Panc1 (cell line): ENCODE measurements at regions of chr5 and their contacts with region 1.

Region 1: DNA sequence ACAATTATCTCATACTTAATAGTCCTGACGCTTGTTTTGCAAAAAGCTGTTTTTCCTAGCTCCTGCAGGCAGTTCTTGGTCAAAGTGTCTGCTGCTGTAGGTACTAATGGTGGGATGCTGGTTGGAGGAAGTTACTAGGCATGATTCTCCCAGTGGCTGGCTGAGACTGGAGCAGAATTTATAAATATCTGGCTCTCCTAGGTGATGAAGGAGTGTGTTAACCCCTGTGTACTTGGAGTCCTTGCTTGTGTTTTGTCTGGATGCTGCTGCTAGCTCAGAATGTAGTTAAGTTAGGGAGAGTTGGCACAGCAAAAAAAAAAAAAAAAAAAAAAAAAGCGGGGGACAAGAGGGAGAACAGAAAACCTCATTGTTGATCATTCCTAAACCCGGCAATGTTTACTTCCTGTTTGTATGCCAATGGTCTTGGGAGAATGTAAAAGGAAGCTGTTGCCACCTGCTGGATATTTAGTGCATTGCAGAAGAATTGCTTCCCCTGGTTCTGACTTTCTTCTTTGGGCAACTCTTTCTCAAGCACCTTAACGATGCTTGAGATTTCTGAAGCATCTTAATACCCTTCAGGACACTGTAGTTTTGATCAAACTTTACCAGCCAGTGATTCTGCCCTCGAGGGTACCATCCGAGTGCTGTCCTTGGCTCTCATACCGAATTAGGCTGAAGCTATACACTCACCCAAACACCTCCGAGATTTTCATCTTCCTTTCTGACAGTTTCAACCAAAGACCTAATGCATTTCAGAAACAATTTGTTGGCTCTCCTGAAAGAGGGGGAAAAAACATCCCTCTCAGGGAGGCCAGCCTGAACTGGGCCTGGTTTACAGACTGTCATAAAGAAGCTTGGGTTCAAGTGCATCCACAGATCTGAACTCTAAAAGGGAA is 71.7 kb upstream of the WWC1 start:
- DNase-seq: peak; percentile 73
- ATAC-seq: peak; percentile 80
- H3K4me3 ChIP-seq: peak overlapping the region; percentile 1 to 40; a peak in 2 of 4 replicates
- H3K27ac ChIP-seq: peak overlapping the region; percentile 3; the same call in 1 of the 2 replicates
- H3K4me1 ChIP-seq: no peaks in the 10 kb centered on the region
- H3K27me3 ChIP-seq: peaks cover 8% of the 10 kb centered on the region
- CTCF ChIP-seq: peak; percentile 87

Region 2: DNA sequence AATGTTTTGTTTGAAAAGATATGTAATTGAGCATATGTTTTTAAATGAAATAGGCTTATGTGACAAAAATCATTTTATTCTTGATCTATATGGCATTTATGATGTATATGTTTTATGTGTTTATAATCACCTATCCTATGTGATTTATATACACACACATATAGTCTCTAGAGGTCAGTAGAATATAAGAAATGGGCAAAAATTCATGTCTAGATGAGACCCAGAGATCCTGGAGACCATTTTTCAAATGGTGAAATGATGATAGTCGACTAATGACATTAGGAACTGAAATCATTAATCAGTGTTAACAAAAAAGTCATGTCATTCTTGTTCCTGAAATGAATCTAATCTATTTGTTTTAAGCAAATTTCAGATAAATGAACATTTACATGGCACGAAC is 637.5 kb before region 1 on chr5:
- CTCF ChIA-PET with region 1: interaction called, 7 read pairs
- POLR2A ChIA-PET with region 1: no interaction called
- in situ Hi-C with region 1: no loop called
- intact Hi-C with region 1: loop called (anchors 2 kb)
- DNase-seq: no peak
- ATAC-seq: no peak
- H3K4me3 ChIP-seq: no peak overlapping the region
- H3K27ac ChIP-seq: no peak overlapping the region
- H3K4me1 ChIP-seq: no peaks in the 10 kb centered on the region
- H3K27me3 ChIP-seq: peaks cover 6% of the 10 kb centered on the region
- CTCF ChIP-seq: peak; percentile 35; the same call in 1 of the 2 replicates

Region 3: DNA sequence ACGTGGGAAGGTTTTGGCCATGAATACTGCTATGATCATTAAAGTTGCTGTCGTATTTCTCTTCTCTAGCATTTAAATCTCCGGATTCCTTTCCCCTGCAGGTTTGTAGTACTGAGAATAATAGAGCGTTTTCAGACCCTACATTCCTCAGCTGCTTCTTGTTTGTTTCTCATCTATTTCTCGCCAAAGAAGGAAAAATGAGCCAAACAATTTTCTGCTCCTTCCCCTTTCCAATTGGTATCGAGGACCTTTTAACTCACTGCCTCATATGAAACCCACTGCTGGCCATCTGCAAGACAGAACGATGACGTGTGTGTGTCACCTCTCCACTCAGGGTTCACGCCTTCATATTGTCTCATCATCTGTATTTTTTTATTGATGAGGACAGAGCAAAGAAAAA is 617.7 kb before region 1 on chr5:
- CTCF ChIA-PET with region 1: no interaction called
- POLR2A ChIA-PET with region 1: no interaction called
- in situ Hi-C with region 1: no loop called
- intact Hi-C with region 1: no loop called
- DNase-seq: no peak
- ATAC-seq: no peak
- H3K4me3 ChIP-seq: no peak overlapping the region
- H3K27ac ChIP-seq: no peak overlapping the region
- H3K4me1 ChIP-seq: no peaks in the 10 kb centered on the region
- H3K27me3 ChIP-seq: no peaks in the 10 kb centered on the region
- CTCF ChIP-seq: no peak

Region 4: DNA sequence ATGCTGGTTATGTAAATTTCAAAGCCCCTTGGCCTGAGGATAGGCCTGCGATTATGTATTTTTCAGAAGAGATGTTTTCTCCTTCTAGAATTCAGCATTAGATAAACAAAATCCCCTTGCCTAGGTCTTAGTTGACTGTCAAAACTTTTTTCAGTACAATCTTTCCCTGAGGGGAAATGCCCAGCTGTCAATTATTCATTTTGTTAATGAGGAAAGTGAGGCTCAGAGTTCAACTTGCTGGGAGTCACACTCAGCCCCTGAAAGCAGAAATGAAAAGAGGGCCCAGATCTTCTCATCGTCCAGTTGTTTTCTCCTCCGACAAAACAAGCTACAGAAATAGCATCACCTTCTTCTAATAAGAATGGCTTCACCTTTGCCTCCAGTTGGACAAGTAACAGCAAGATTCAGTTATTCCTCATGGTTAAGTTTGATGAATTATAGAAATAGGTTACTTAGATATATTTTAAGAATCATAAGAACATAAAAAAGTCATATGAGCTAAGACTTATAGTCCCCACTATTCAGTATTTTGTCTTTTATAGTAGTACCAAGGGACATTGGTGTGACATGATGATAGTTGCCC is 555.5 kb before region 1 on chr5:
- CTCF ChIA-PET with region 1: no interaction called
- POLR2A ChIA-PET with region 1: no interaction called
- in situ Hi-C with region 1: no loop called
- intact Hi-C with region 1: no loop called
- DNase-seq: no peak
- ATAC-seq: no peak
- H3K4me3 ChIP-seq: no peak overlapping the region
- H3K27ac ChIP-seq: no peak overlapping the region
- H3K4me1 ChIP-seq: no peaks in the 10 kb centered on the region
- H3K27me3 ChIP-seq: no peaks in the 10 kb centered on the region
- CTCF ChIP-seq: no peak

Region 5: GRCh38 chr5:167730121-167730520 is 489.6 kb before region 1 on chr5:
- CTCF ChIA-PET with region 1: interaction called, 13 read pairs
- POLR2A ChIA-PET with region 1: no interaction called
- in situ Hi-C with region 1: no loop called
- intact Hi-C with region 1: no loop called
- DNase-seq: no peak
- ATAC-seq: no peak
- H3K4me3 ChIP-seq: no peak overlapping the region
- H3K27ac ChIP-seq: no peak overlapping the region
- H3K4me1 ChIP-seq: no peaks in the 10 kb centered on the region
- H3K27me3 ChIP-seq: no peaks in the 10 kb centered on the region
- CTCF ChIP-seq: no peak

Region 6: GRCh38 chr5:168104811-168105481 is 114.8 kb before region 1 on chr5:
- CTCF ChIA-PET with region 1: interaction called, 10 read pairs
- POLR2A ChIA-PET with region 1: no interaction called
- in situ Hi-C with region 1: no loop called
- intact Hi-C with region 1: no loop called
- DNase-seq: no peak
- ATAC-seq: no peak
- H3K4me3 ChIP-seq: no peak overlapping the region
- H3K27ac ChIP-seq: no peak overlapping the region
- H3K4me1 ChIP-seq: no peaks in the 10 kb centered on the region
- H3K27me3 ChIP-seq: peaks cover 3% of the 10 kb centered on the region; the same call in 1 of the 2 replicates
- CTCF ChIP-seq: no peak

Region 7: DNA sequence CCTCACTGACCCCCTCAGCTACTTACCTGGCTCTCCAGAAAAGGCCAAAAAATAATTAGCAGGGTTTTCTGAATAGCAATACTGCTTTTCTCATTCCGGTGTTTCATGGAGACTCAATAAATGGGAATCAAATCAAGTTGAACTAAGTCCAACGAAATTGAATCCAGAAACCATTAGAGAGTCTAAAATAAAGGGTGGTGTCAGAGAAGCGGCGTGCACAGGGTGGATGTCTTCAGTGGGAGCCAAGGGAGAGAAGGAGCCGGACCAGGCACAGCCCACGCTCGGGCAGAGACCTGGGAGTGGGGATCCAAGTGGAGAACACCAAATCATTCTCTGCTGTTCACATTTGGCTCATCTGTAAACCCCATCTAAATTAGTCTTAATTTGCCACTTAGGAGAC is 31.5 kb after region 1 on chr5:
- CTCF ChIA-PET with region 1: interaction called, 19 read pairs
- POLR2A ChIA-PET with region 1: no interaction called
- in situ Hi-C with region 1: no loop called
- intact Hi-C with region 1: no loop called
- DNase-seq: no peak
- ATAC-seq: no peak
- H3K4me3 ChIP-seq: no peak overlapping the region
- H3K27ac ChIP-seq: no peak overlapping the region
- H3K4me1 ChIP-seq: no peaks in the 10 kb centered on the region
- H3K27me3 ChIP-seq: no peaks in the 10 kb centered on the region
- CTCF ChIP-seq: no peak

Region 8: DNA sequence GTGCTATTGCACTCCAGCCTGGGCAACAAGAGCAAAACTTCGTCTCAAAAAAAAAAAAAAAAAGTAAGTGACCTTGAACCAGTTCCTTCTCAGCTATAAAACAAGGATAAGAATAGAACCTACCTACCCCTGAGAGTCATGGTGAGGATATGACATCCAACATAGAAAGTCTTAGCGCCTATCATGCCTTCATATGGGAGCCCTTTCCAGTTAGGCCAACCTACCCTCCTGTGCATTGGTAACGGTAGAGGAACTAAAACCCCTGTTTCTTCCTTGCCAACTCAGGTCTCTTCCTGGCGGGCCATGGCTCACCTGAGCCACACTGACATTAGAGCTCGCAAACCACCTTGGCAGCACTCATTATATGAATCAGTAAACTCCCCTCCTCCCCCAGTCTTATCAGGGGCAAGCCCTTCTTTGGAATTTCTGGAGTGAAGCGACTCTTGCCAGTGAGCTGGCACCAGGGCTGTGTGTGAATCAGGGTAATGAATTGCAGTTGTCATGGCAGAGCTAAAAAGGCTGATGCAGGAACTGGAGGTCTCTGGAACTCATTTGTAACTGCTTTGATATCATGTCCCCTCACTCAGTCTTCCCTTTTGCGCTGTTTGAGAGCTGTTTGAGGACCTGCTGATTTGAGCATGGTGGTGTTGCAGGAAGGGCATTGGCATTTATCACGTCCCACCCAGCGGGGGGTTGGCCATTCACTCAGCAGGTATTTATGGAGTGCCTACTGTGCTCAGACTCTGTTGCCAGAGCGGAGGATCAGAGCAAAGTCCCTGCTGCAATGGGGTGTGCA is 82.0 kb after region 1 on chr5:
- CTCF ChIA-PET with region 1: no interaction called
- POLR2A ChIA-PET with region 1: no interaction called
- in situ Hi-C with region 1: no loop called
- intact Hi-C with region 1: no loop called
- DNase-seq: no peak
- ATAC-seq: peak; percentile 69
- H3K4me3 ChIP-seq: no peak overlapping the region
- H3K27ac ChIP-seq: no peak overlapping the region
- H3K4me1 ChIP-seq: peaks cover 17% of the 10 kb centered on the region
- H3K27me3 ChIP-seq: no peaks in the 10 kb centered on the region
- CTCF ChIP-seq: no peak